Endothelial cell of umbilical vein (primary cell): ENCODE measurements at regions of chr16 and their contacts with region 1.

Region 1: DNA sequence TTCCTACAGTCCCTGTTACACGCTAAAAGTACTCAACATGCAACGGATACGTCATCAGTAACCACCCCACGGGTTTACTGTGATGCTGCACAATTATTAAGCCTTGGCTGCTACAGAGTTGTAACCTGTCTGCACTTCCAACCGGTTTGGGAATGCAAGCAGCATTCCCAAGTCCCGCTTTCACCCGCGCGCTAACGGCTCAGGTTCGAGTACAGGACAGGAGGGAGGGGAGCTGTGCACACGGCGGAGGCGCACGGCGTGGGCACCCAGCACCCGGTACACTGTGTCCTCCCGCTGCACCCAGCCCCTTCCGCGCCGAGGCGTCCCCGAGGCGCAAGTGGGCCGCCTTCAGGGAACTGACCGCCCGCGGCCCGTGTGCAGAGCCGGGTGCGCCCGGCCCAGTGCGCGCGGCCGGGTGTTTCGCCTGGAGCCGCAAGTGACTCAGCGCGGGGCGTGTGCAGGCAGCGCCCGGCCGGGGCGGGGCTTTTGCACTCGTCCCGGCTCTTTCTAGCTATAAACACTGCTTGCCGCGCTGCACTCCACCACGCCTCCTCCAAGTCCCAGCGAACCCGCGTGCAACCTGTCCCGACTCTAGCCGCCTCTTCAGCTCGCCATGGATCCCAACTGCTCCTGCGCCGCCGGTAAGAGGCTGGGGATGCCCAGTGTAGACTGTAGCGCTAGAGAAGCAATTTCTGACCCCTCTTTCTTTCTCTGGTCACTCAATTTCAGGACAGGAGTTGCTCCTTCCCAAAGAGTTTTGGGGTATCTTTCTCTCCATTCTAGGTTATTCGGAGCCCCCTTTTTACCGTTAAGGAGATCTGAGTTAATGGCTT is at the start of gene MT2A:
- DNase-seq: peak; percentile 96
- H3K4me3 ChIP-seq: peak within 1 kb of the TSS; percentile 50 to 93 (median 83)
- H3K27ac ChIP-seq: peak within 1 kb of the TSS; percentile 99
- H3K4me1 ChIP-seq: peaks cover 61% of the 10 kb centered on the region
- H3K27me3 ChIP-seq: no peaks in the 10 kb centered on the region
- CTCF ChIP-seq: no peak
- POLR2A ChIP-seq: peak; percentile 99
- total RNA-seq, gene MT2A: 1,337 and 1,517 TPM in 2 replicates

Region 2: DNA sequence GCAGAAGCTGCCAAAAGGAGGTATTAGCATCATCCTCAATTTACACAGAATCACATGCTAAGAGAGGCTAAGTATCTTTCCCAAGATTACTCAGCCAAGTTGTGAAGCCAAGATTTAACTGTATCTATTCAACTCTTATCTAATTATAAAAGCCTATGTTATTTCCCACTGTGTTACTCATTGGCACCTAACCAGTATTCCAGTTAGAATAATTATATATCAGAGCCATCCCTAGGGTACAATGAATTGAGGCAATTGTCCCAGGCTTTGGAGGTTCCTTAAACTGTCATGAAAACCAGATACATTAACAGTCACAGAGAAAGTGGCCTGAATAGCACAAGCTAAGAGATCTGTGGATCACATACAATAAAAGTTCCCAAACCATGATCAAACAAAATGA is 172.0 kb before region 1 on chr16:
- CTCF ChIA-PET with region 1: no interaction called
- POLR2A ChIA-PET with region 1: no interaction called
- dilution Hi-C with region 1: no loop called
- intact Hi-C with region 1: no loop called
- DNase-seq: no peak
- H3K4me3 ChIP-seq: no peak overlapping the region
- H3K27ac ChIP-seq: no peak overlapping the region
- H3K4me1 ChIP-seq: no peaks in the 10 kb centered on the region
- H3K27me3 ChIP-seq: no peaks in the 10 kb centered on the region
- CTCF ChIP-seq: no peak
- POLR2A ChIP-seq: no peak

Region 3: GRCh38 chr16:56450986-56451752 is 157.1 kb before region 1 on chr16 and contains the starts of genes NUDT21 and OGFOD1:
- CTCF ChIA-PET with region 1: no interaction called
- POLR2A ChIA-PET with region 1: no interaction called
- dilution Hi-C with region 1: no loop called
- intact Hi-C with region 1: loop called (anchors 2 kb)
- DNase-seq: peak; percentile 98
- H3K4me3 ChIP-seq: peak within 1 kb of the TSS; percentile 80 to 99 (median 84)
- H3K27ac ChIP-seq: peak within 1 kb of the TSS; percentile 50
- H3K4me1 ChIP-seq: peaks cover 30% of the 10 kb centered on the region
- H3K27me3 ChIP-seq: no peaks in the 10 kb centered on the region
- CTCF ChIP-seq: no peak
- POLR2A ChIP-seq: peak; percentile 75
- total RNA-seq, gene NUDT21: 155 and 158 TPM in 2 replicates
- total RNA-seq, gene OGFOD1: 52.3 and 54.8 TPM in 2 replicates

Region 4: GRCh38 chr16:56525236-56525635 is 83.0 kb before region 1 on chr16:
- CTCF ChIA-PET with region 1: no interaction called
- POLR2A ChIA-PET with region 1: no interaction called
- dilution Hi-C with region 1: no loop called
- intact Hi-C with region 1: loop called (anchors 1 kb)
- DNase-seq: no peak
- H3K4me3 ChIP-seq: no peak overlapping the region
- H3K27ac ChIP-seq: peak overlapping the region; percentile 88
- H3K4me1 ChIP-seq: peaks cover 12% of the 10 kb centered on the region
- H3K27me3 ChIP-seq: peaks cover 0 to 1% of the 10 kb centered on the region in 2 experiments
- CTCF ChIP-seq: no peak
- POLR2A ChIP-seq: no peak

Region 5: GRCh38 chr16:56625140-56625942 is 17.1 kb after region 1 on chr16 and contains the start of gene MT1E:
- CTCF ChIA-PET with region 1: interaction called, 8 read pairs
- POLR2A ChIA-PET with region 1: interaction called, 51 read pairs
- dilution Hi-C with region 1: no loop called
- intact Hi-C with region 1: loop called (anchors 1 kb)
- DNase-seq: peak; percentile 54
- H3K4me3 ChIP-seq: peak within 1 kb of the TSS; percentile 21 to 74 (median 64)
- H3K27ac ChIP-seq: peak within 1 kb of the TSS; percentile 61
- H3K4me1 ChIP-seq: peaks cover 12% of the 10 kb centered on the region
- H3K27me3 ChIP-seq: no peaks in the 10 kb centered on the region
- CTCF ChIP-seq: no peak
- POLR2A ChIP-seq: peak; percentile 99
- total RNA-seq, gene MT1E: 201 and 346 TPM in 2 replicates

Region 6: GRCh38 chr16:56931892-56932720 is 323.8 kb after region 1 on chr16 and contains the start of gene HERPUD1:
- CTCF ChIA-PET with region 1: no interaction called
- POLR2A ChIA-PET with region 1: no interaction called
- dilution Hi-C with region 1: no loop called
- intact Hi-C with region 1: loop called (anchors 1 kb)
- DNase-seq: peak; percentile 98
- H3K4me3 ChIP-seq: peak within 1 kb of the TSS; percentile 66 to 94 (median 85)
- H3K27ac ChIP-seq: peak within 1 kb of the TSS; percentile 80
- H3K4me1 ChIP-seq: peaks cover 26% of the 10 kb centered on the region
- H3K27me3 ChIP-seq: no peaks in the 10 kb centered on the region
- CTCF ChIP-seq: no peak
- POLR2A ChIP-seq: peak; percentile 99
- total RNA-seq, gene HERPUD1: 101 and 109 TPM in 2 replicates